Activated CD4-positive, alpha-beta memory T cell treated with anti-CD3 and anti-CD28 coated beads for 36 hours (primary cell): ENCODE measurements at regions of chr7 and their contacts with region 1.

Region 1: GRCh38 chr7:100177045-100178001 is at the starts of genes GPC2 and STAG3:
- DNase-seq: peak; percentile 99
- H3K4me3 Mint-ChIP-seq: peak within 1 kb of the TSS; percentile 74
- H3K27ac Mint-ChIP-seq: no peak within 1 kb of the TSS
- H3K4me1 Mint-ChIP-seq: peaks cover 34% of the 10 kb centered on the region
- H3K27me3 Mint-ChIP-seq: no peaks in the 10 kb centered on the region
- total RNA-seq, gene GPC2: 4.8 to 5.5 TPM
- total RNA-seq, gene STAG3: 20.8 to 20.9 TPM

Region 2: DNA sequence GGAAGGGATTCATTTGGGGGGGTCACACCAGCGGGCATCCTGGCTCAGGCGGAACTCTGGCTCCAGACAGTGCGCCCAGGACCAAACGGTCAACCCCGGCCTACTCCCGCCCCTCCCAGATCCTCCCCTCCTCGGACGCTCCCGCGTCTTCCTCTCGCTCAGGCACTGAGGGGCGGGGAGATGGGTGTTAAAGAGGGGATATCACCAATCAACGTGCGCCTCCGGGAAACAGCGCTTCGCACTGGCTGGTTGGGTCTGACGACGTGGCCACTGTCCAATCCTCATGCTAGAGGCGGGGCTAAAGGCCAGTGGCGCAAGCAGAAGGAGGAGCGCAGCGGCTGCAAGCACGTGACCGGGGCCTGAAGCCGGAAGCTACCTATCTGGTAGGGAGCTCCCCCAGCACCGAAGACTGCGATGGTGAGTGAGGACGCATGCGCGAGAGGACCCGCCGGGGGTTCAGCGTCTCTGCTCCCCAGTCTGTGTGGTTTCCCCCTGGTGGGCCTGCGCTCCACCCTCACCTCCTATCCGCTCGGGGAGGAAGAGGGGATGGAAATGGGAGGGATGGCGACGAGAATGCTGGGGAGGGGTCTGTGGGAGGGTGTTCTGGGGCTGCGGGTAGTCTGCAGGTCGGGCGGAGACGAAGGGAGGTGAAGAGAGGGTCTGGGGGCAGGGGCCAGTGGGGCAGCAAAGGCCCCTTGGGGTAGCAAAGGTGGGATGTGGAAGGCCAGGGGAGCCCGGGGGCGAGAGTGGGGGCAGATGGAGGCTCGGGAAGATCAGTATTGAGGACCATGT is 28.6 kb before region 1 on chr7 and contains the start of gene LAMTOR4:
- CTCF ChIA-PET with region 1: no interaction called
- POLR2A ChIA-PET with region 1: interaction called, 4 read pairs
- intact Hi-C with region 1: loop called (anchors 1 kb)
- DNase-seq: peak; percentile 99
- H3K4me3 Mint-ChIP-seq: peak within 1 kb of the TSS; percentile 95
- H3K27ac Mint-ChIP-seq: peak within 1 kb of the TSS; percentile 94
- H3K4me1 Mint-ChIP-seq: peaks cover 25% of the 10 kb centered on the region
- H3K27me3 Mint-ChIP-seq: no peaks in the 10 kb centered on the region
- total RNA-seq, gene LAMTOR4: 136 to 151 TPM

Region 3: DNA sequence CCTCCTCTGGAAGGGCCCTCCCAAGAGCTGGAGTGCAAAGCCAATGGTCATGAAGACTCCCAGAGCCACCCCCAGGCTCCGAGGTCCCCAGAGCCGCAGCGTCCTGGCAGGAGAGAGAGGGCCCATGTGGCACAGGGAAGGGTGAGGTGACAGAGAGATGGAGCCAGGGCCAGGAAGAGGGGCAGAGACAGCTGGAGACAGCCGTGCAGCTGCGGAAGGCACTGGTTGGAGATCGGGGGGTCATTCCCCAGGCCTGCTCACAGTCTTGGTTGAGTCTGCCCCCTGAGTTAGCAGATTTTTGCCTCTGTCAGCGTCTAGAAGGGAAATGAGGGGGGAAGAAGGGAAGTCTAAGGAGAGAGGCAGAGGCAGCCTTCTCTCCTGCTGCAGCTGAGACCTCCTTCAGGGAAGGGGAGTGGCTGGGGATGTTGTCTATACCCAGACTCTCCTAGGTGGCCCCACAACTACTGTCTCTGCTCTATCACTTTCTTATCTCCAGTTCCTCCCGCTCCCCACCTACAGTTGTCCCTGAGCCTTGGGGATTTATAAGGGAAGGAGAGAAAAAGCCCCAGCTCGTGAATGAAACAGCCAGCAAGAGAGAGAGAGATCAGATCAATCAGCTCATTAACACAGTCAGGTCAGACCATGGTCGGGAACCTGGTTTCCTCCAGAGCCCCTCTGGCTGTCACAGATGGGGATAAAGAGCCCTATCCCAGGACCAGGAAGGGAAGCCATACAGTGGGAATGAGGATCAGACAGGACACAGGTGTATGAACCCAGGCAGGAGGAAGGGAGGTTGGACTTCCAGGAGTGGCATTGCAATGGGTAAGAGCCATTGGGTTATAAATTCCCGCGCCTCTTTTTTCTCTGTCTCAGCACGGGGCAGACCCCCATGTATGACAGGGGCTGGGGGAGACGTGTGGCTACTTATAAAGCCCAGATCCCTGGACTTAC is 10.1 kb before region 1 on chr7:
- CTCF ChIA-PET with region 1: interaction called, 3 read pairs
- POLR2A ChIA-PET with region 1: no interaction called
- intact Hi-C with region 1: loop called (anchors 1 kb)
- DNase-seq: no peak
- H3K4me3 Mint-ChIP-seq: peak overlapping the region; percentile 72
- H3K27ac Mint-ChIP-seq: peak overlapping the region; percentile 47
- H3K4me1 Mint-ChIP-seq: peaks cover 77% of the 10 kb centered on the region
- H3K27me3 Mint-ChIP-seq: peaks cover 2% of the 10 kb centered on the region